WTC11 (cell line): ENCODE measurements at regions of chr6 and their contacts with region 1.

Region 1: GRCh38 chr6:47787620-47788497 is 6.0 kb downstream of the OPN5 start:
- DNase-seq: peak; percentile 71
- ATAC-seq: peak; percentile 74
- H3K4me3 Mint-ChIP-seq: no peak overlapping the region
- H3K27ac Mint-ChIP-seq: no peak overlapping the region
- H3K4me1 Mint-ChIP-seq: peaks cover 28% of the 10 kb centered on the region
- H3K27me3 Mint-ChIP-seq: peaks cover 81% of the 10 kb centered on the region
- CTCF ChIP-seq: peak; percentile 93

Region 2: DNA sequence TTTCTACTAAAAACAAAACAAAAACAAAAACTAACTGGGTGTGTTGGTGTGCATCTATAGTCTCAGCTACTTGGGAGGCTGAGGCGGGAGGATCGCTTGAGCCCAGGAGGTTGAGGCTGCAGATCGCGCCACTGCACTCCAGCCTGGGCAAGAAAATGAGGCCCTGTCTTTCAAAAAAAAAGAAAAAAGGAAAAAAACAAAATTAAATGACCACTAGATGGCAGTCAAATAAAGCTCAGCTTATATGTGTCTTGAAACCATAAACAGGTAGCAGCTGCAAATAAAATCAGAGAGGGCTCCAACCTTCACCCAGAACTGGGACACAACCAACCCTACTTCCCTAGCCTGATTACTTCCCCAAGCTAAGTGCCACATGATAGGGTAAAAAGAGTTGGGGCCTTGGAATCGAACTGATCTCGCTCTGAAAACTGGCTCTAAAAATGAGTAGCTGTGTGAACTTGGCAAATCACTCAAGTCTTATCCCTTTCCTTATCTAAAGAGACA is 156.5 kb before region 1 on chr6:
- CTCF ChIA-PET with region 1: interaction called, 13 read pairs
- POLR2A ChIA-PET with region 1: no interaction called
- DNase-seq: no peak
- ATAC-seq: peak; percentile 63
- H3K4me3 Mint-ChIP-seq: no peak overlapping the region
- H3K27ac Mint-ChIP-seq: no peak overlapping the region
- H3K4me1 Mint-ChIP-seq: peaks cover 29% of the 10 kb centered on the region
- H3K27me3 Mint-ChIP-seq: no peaks in the 10 kb centered on the region
- CTCF ChIP-seq: peak; percentile 41; the same call in 1 of the 2 replicates

Region 3: DNA sequence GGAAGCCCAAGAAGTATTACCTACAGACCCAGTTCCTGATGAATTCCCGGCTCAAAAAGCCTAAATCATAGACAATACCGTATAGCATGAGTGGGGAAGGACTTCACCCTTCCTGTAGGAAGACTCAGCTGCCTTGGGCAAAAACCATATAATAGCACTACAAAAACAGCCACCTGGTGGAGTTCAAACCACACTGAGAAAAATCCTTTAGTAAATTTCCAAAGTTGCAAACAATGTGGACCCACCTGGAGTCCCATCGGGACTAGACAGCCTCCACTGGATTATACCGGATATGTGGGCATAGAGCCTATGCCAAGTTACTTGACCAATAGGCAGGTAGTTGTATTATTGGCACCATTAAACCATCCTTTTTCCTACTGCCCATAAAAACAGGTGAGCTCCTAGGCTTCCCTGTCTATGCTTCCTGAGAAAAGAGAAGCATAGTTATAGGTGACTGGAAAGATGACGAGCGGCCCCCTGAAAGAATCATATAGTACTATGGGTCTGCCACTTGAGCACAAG is 141.2 kb before region 1 on chr6:
- CTCF ChIA-PET with region 1: no interaction called
- POLR2A ChIA-PET with region 1: no interaction called
- DNase-seq: no peak
- ATAC-seq: no peak
- H3K4me3 Mint-ChIP-seq: no peak overlapping the region
- H3K27ac Mint-ChIP-seq: no peak overlapping the region
- H3K4me1 Mint-ChIP-seq: peaks cover 10% of the 10 kb centered on the region
- H3K27me3 Mint-ChIP-seq: peaks cover 6% of the 10 kb centered on the region
- CTCF ChIP-seq: no peak

Region 4: GRCh38 chr6:47680051-47680450 is 107.8 kb before region 1 on chr6:
- CTCF ChIA-PET with region 1: no interaction called
- POLR2A ChIA-PET with region 1: no interaction called
- DNase-seq: no peak
- ATAC-seq: no peak
- H3K4me3 Mint-ChIP-seq: no peak overlapping the region
- H3K27ac Mint-ChIP-seq: no peak overlapping the region
- H3K4me1 Mint-ChIP-seq: no peaks in the 10 kb centered on the region
- H3K27me3 Mint-ChIP-seq: no peaks in the 10 kb centered on the region
- CTCF ChIP-seq: no peak

Region 5: DNA sequence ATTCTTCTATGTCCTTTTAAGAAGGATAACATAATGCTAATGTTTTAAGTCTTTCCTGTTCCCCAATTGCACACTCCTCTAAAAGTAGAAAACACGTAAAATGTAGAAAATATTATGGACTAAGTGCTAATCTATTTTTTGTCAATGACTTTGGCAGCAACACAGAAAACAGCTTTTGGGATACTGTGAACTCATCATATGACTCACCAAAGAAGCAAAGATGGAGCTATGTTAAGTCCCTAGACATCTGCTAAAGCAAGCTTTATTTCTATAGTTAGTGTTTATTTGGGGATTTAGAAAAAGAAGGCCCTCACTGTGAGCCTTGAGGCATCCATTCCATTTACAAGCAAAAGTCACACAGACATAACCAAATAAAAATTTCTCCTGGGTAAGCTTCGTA is 17.0 kb after region 1 on chr6:
- CTCF ChIA-PET with region 1: no interaction called
- POLR2A ChIA-PET with region 1: no interaction called
- DNase-seq: no peak
- ATAC-seq: no peak
- H3K4me3 Mint-ChIP-seq: no peak overlapping the region
- H3K27ac Mint-ChIP-seq: no peak overlapping the region
- H3K4me1 Mint-ChIP-seq: no peaks in the 10 kb centered on the region
- H3K27me3 Mint-ChIP-seq: no peaks in the 10 kb centered on the region
- CTCF ChIP-seq: no peak

Region 6: GRCh38 chr6:48476257-48476656 is 688.4 kb after region 1 on chr6:
- CTCF ChIA-PET with region 1: interaction called, 15 read pairs
- POLR2A ChIA-PET with region 1: no interaction called
- DNase-seq: peak; percentile 31
- ATAC-seq: peak; percentile 93
- H3K4me3 Mint-ChIP-seq: no peak overlapping the region
- H3K27ac Mint-ChIP-seq: no peak overlapping the region
- H3K4me1 Mint-ChIP-seq: peaks cover 4% of the 10 kb centered on the region; the same call in 1 of the 2 replicates
- H3K27me3 Mint-ChIP-seq: no peaks in the 10 kb centered on the region
- CTCF ChIP-seq: no peak

Region 7: DNA sequence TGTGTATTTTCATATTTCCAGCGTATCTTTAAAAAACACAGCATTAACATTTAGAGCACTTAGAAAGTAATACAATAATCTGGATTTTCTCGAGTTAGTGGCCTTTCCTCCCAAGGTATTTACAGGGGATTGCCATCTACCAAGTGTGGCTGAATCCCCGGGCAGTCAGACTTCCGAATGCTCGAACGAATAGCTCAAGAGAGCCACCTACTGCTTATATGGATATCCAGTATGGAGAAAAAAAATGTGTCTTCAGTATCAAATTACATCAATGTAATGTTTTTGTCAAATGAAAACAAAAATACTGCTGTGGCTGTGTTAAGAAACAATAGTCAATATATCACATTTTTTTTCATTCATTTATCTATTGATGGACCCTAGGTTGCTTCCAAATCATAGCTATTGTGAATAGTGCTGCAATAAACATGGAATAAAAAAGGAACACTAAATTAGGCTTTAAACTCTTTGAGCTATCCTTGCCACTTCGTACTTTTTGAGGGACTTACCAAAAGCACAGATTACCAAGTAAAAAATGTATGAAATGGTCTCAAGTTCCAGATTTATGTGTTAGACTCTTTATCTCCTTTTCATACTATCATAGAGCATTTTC is 977.6 kb after region 1 on chr6:
- CTCF ChIA-PET with region 1: interaction called, 15 read pairs
- POLR2A ChIA-PET with region 1: no interaction called
- DNase-seq: peak; percentile 38
- ATAC-seq: peak; percentile 98
- H3K4me3 Mint-ChIP-seq: peak overlapping the region; percentile 37
- H3K27ac Mint-ChIP-seq: no peak overlapping the region
- H3K4me1 Mint-ChIP-seq: peaks cover 29% of the 10 kb centered on the region
- H3K27me3 Mint-ChIP-seq: no peaks in the 10 kb centered on the region
- CTCF ChIP-seq: peak; percentile 37; the same call in 1 of the 2 replicates